Heart left ventricle (tissue), 16 donors: ENCODE measurements at regions of chr2 and their contacts with region 1.

Region 1: GRCh38 chr2:218568190-218569037 is at the starts of genes CNOT9 and USP37:
- DNase-seq: peak; percentile 99 to 100 (median 100)
- ATAC-seq: peak; percentile 96 to 99 (median 98)
- H3K4me3 ChIP-seq: peak within 1 kb of the TSS; percentile 60 to 90 (median 80)
- H3K27ac ChIP-seq: peak within 1 kb of the TSS; percentile 83 to 99 (median 94)
- H3K4me1 ChIP-seq: peaks cover 8 to 53% (median 31%) of the 10 kb centered on the region in 12 donors
- H3K27me3 ChIP-seq: no peaks in the 10 kb centered on the region
- CTCF ChIP-seq: peak in 1 of 12 donors; percentile 6
- POLR2A ChIP-seq: peak in 1 of 2 donors; percentile 60
- total RNA-seq, gene CNOT9: 19.4 to 34.8 (median 23.1) TPM
- total RNA-seq, gene USP37: 5.2 to 10.3 (median 7.8) TPM

Region 2: DNA sequence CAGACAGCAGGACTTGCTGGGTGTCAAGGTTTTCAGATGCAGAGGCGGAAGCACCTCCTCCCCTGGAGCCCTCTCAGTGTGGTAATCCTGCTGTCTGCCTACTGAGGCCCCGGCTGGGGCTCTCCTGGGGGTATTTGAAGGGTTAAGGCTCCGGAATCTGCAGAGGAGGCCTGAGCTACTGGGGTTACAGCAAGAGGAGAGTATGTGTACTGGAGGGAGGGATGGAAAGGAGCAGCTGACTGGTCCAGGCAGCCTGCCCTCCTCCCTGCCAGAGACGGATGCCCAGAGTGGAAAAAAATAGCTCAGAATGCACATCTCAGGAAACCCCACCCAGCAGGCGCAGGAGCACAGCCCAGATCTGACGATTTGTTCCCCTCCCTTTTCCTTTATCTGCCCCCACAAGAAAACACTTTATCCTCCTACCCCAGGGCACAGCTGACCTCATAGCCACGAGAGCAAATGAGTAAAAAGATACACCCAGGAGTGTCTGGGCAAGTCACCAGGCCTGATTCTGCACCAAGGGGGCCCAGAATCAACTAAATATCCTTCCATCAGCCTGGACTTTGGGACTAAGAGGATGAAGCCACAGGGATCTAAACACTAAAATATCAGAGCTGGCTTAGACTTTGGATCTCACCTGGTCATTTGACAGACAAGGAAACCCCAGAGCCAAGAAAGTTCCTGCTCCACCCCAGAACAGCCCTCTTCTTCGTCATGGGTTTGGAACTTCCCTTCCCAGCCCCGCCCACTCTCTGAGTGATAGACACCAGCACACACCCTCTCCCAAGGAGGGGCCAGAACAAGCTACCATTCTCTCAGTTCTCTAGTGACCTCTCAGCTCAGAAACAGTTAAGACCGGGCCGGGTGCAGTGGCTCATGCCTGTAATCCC is 281.6 kb before region 1 on chr2:
- intact Hi-C with region 1: loop called in 2 of 10 experiments (anchors 5 to 10 kb)
- DNase-seq: peak; percentile 88 to 96 (median 95)
- ATAC-seq: peak; percentile 83 to 89 (median 85)
- H3K4me3 ChIP-seq: peak overlapping the region; percentile 28 to 70 (median 53)
- H3K27ac ChIP-seq: peak overlapping the region; percentile 89 to 100 (median 96)
- H3K4me1 ChIP-seq: peaks cover 27 to 99% (median 92%) of the 10 kb centered on the region in 12 donors
- H3K27me3 ChIP-seq: no peaks in the 10 kb centered on the region
- CTCF ChIP-seq: no peak
- POLR2A ChIP-seq: peak in 1 of 2 donors; percentile 35

Region 3: DNA sequence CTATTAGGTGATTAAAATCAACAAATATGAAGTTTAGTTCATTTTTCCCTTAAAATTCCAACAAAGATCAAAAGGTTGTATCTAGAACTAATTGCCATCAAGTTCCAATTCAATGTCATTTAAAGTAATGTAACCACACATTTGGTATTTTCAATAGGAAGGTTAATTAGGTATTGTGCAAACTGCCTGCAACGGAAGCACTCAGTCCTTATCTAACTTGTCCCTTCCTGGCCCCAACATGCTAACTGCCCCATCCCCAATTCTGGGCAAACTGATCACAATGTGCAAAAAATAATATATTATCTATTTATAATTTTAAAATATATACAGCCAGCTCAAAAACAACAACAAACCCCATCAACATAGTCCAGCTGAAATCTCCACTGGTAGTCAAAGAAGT is 116.3 kb before region 1 on chr2:
- intact Hi-C with region 1: no loop called
- DNase-seq: no peak
- ATAC-seq: no peak
- H3K4me3 ChIP-seq: no peak overlapping the region
- H3K27ac ChIP-seq: no peak overlapping the region
- H3K4me1 ChIP-seq: no peaks in the 10 kb centered on the region
- H3K27me3 ChIP-seq: no peaks in the 10 kb centered on the region
- CTCF ChIP-seq: no peak
- POLR2A ChIP-seq: no peak

Region 4: DNA sequence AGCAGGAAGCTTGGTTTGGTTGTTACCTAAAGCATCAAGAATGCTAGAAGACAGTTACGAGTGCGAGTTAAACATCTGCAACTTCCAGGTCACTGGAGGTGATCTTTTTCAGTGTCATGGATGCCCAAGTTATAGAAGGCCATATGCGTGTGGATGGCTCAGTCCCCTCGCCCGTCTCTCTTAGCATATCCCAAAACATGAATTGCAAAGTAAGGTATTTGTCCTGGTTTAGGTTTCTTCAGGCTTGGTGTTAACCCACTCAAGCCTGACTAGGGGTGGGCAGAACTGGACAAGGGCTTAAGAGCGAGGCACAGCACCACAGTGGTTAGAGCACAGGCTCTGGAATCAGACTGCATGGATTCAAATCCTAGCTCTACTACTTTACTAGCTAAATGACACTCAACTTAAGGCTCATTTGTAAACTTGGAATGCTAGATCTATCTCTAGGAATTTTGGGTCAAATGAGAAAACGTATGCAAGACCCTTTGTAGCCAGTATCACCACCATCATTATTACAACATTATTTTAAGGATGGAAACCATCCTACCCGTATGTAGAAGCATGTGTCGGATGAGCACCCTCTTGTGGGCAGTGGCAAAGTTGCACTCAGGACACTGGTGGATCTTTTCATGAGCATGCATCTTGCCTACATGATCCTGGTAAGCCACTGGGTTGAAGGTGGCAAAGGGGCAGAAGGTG is 79.8 kb after region 1 on chr2:
- intact Hi-C with region 1: loop called in 6 of 10 experiments (anchors 5 to 10 kb)
- DNase-seq: peak in 1 of 5 donors; percentile 44
- ATAC-seq: peak; percentile 15 to 73 (median 69)
- H3K4me3 ChIP-seq: no peak overlapping the region
- H3K27ac ChIP-seq: no peak overlapping the region
- H3K4me1 ChIP-seq: peaks cover 0 to 7% (median 0%) of the 10 kb centered on the region in 12 donors
- H3K27me3 ChIP-seq: no peaks in the 10 kb centered on the region
- CTCF ChIP-seq: peak; percentile 62 to 82 (median 74)
- POLR2A ChIP-seq: no peak

Region 5: GRCh38 chr2:218659258-218659987 is 91.0 kb after region 1 on chr2 and contains the starts of genes BCS1L and ZNF142:
- intact Hi-C with region 1: loop called in 7 of 10 experiments (anchors 5 to 10 kb)
- DNase-seq: peak; percentile 92 to 95 (median 95)
- ATAC-seq: peak; percentile 89 to 98 (median 96)
- H3K4me3 ChIP-seq: peak within 1 kb of the TSS; percentile 60 to 96 (median 88)
- H3K27ac ChIP-seq: peak within 1 kb of the TSS; percentile 45 to 91 (median 82)
- H3K4me1 ChIP-seq: peaks cover 0 to 45% (median 25%) of the 10 kb centered on the region in 12 donors
- H3K27me3 ChIP-seq: no peaks in the 10 kb centered on the region
- CTCF ChIP-seq: no peak
- POLR2A ChIP-seq: peak in 1 of 2 donors; percentile 81
- total RNA-seq, gene BCS1L: 27.3 to 53.2 (median 43.7) TPM
- total RNA-seq, gene ZNF142: 18.1 to 46.0 (median 21.8) TPM